AG04449 (cell line): ENCODE measurements at regions of chr19 and their contacts with region 1.

Region 1: DNA sequence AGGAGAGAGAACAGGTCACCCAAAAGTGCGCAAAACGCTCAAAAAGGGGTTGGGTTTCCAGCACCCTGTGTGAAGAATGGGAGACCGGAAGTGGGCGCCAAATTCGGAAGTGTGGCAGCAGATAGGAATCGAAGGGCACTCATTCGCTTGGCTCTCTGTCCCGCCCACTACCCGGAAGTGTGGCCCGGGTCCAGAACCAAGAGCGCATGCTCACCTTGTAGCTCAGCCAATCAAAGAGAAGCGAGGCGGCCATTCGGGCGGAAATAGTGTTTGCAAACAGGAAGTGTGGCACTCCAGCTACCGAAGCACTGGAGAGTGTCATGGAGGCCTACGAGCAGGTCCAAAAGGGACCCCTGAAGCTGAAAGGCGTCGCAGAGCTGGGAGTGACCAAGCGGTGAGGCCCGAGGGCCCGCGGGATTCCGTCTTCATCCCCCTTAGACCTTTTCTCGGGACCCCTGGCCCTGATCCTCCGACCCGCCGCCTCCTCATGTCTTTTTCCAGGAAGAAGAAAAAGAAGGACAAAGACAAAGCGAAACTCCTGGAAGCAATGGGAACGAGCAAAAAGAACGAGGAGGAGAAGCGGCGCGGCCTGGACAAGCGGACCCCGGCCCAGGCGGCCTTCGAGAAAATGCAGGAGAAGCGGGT is at the start of gene FAM32A:
- DNase-seq: peak; percentile 95
- H3K4me3 ChIP-seq: peak within 1 kb of the TSS; percentile 95
- CTCF ChIP-seq: peak; percentile 5

Region 2: DNA sequence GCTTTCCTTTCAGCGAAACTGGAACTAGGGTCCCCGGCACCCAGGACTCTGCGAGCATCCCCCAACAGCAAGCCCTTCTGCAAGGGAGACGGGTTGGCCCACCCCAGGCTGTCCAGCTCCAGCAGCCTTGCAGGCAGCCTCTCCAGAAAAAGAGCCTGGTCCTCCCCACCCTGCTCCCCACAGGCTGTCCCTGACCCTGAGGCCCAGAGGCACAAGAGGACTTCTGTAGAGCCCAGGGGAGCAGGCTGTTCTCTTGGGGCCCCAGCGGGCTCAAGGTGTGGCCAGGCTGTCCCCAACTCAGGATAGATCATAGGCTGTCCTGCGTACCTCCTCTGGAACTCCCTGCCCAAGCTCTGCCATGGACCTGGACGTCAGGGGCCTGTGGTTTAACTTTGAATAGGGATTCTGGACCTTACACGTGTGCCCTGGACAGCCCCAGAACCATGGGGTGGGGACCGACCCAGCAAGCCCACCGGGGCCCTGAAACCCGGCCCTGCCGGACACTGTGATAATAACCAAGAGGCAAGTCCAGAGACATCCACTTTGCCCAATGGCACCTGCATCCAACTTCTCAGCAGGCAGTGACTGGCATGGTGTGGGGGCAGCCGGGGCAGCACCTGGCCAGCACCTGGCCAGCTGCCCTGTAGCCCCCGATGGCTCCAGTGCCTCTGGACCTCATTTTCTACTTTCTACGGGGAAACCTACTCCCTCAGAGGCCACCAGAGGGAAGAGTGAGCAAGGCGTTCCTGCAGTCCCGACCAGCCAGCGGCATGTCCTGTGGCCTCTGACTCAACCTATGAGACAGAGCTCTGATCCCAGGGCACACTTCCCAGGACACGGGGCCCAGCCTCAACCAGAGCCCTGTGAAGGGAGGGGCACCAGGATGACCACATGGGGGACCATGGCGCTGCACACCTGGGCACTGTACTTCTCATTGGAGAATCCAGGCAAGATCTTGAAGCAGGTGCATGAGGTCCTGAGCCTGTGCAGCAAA is 159.8 kb before region 1 on chr19:
- CTCF ChIA-PET with region 1: interaction called, 40 read pairs
- POLR2A ChIA-PET with region 1: no interaction called
- DNase-seq: peak; percentile 14
- H3K4me3 ChIP-seq: no peak overlapping the region
- CTCF ChIP-seq: peak; percentile 64

Region 3: DNA sequence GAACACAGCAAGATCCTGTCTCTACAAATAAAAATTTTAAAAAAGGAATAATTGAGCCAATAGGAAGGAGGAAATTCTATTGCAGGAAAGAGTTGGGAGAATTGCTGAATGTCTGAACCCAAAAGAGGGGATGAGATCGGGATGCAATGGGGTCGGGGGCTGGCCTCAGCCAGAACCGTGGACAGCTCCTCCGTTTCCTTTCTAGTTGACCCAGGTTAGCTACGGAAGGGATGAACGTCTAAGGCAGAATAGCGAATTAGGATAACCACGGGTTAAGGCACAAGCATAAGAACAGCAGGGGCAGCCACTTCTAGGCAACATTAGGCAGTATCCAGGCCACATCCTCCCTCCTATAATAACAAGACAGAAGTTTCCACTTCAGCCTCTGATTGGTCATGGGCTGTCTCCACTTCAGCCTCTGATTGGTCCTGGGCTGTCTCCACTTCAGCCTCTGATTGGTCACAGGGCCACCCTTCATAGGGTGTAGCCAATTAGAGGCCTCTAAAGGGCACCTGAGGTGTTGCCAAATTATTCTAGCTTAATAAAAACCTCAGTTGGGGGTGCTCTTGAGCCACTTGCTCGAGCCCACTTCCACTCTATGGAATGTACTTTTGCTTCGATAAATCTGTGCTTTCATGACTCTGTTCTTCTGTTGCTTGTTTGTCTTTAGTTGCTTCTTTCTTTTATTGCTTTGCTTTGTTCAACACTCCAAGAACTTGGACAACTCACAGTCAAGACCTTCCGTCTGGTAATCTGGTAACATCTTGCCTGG is 133.8 kb before region 1 on chr19:
- CTCF ChIA-PET with region 1: interaction called, 12 read pairs
- POLR2A ChIA-PET with region 1: no interaction called
- DNase-seq: no peak
- H3K4me3 ChIP-seq: no peak overlapping the region
- CTCF ChIP-seq: no peak

Region 4: DNA sequence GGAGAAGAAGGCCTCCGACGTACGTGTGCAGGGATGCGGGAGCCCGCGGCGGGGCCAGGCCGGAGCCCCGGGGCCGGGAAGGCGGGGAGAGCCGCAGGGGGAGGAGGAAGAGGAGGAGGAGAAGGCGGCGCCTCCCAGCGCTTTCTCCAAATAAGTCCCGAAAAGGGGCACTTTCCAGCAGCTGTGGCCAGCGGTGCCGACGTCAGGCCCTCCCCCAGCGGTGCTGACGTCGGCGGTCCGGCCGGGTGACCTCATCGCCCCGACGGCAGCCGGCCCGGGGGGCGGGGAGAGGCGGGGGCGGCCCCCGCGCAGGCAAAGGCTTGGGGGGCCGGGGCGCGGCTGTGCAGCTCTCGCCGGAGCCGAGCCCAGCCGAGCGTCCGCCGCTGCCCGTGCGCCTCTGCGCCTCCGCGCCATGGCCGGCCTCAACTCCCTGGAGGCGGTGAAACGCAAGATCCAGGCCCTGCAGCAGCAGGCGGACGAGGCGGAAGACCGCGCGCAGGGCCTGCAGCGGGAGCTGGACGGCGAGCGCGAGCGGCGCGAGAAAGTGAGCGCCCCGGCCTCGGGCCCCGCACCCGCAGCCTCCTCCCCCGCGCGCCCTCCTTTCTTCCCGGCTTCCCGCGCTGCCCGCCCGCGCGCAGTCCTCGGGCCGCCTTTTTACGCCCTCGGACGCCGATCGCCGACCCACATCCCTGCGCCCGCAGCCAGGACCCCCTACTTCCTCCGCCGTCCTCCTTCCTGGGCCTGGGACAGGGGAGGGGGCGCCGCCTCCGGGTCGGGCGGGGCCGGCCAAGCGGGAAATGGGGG is 108.9 kb before region 1 on chr19 and contains the start of gene TPM4:
- CTCF ChIA-PET with region 1: interaction called, 3 read pairs
- POLR2A ChIA-PET with region 1: interaction called, 10 read pairs
- DNase-seq: peak; percentile 79
- H3K4me3 ChIP-seq: peak within 1 kb of the TSS; percentile 97
- CTCF ChIP-seq: no peak

Region 5: DNA sequence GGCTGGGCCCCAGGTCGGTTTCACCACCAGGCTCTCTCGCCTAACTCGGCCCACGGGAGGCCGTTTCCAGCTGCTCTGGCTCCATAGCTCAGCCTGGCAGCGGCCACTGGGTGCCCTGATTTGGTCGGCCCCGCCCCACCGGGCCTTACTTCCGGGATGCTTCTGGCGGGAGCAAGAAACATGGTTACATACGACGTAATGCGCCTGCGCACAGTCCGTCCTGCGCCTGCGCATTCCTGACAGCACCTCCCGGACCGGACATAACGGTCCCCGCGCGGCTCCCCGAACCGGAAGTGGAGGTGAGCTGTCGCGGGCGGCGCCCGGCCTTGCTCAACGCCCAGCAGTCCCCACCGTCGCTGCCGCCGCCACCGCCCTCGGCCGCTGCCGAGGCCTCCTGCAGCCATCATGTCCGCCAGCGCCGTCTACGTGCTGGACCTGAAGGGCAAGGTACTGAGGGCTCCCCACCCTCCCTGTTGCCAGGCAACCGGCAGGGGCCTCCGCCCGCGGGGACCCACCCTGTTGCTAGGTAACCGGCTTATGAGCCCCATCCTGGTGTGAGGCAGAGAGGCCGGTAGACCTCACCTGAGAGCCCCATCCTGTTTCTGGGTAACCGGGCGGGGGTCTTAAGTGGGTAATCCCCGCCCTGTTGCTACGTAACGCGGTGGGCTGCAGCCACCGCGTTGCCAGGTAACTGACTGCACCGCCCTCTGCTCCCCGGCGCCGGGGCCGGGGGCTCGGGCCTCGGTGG is 12.6 kb after region 1 on chr19 and contains the start of gene AP1M1:
- CTCF ChIA-PET with region 1: interaction called, 27 read pairs
- POLR2A ChIA-PET with region 1: interaction called, 4 read pairs
- DNase-seq: peak; percentile 75
- H3K4me3 ChIP-seq: peak within 1 kb of the TSS; percentile 97
- CTCF ChIP-seq: no peak

Region 6: GRCh38 chr19:16233836-16234551 is 48.7 kb after region 1 on chr19:
- CTCF ChIA-PET with region 1: no interaction called
- POLR2A ChIA-PET with region 1: no interaction called
- DNase-seq: no peak
- H3K4me3 ChIP-seq: no peak overlapping the region
- CTCF ChIP-seq: no peak